ENCODE measurements at regions of chr17 and their contacts with region 1.

Region 1: DNA sequence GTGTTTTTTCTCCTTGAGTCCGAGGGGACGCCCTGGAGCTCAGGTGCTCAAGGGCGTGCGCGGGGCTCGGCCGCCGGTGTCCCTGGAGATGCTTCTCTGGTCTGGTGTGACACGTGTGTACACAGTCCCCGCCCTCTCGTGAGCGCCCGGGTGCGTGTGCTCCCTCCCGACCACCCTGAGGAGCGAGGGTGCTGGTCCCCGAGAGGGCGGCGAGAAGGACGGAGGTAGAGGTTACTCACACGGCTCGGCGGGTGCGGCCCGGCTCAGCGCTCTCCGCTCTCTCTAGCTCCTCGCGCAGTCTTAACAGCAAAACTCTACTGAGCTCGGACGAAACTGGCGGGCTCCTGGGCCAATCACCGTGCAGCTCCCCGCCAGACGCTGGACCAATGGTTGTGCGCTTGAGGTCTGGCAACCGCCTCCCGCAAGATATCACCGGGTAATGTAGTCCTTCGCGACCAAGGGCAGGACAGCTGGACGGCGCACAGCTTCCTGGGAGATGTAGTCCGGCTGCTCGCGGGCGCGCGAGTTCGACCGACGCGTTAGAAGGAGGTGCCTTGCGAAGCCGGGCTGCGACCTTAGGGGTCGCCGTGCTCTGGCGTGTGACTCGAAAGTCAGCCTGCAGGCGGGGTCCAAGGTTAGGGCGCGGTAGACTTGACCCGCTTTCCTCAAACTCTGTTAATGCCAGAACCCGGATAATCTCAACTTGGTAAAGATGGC is at the start of gene SLC25A19:
- DNase-seq: peak; percentile 99
- H3K4me3 ChIP-seq: peak within 1 kb of the TSS; percentile 87
- H3K27ac ChIP-seq: peak within 1 kb of the TSS; percentile 90
- H3K4me1 ChIP-seq: no peaks in the 10 kb centered on the region
- H3K27me3 ChIP-seq: no peaks in the 10 kb centered on the region
- CTCF ChIP-seq: no peak
- total RNA-seq, gene SLC25A19: 40.0 and 45.0 TPM in 2 replicates

Region 2: DNA sequence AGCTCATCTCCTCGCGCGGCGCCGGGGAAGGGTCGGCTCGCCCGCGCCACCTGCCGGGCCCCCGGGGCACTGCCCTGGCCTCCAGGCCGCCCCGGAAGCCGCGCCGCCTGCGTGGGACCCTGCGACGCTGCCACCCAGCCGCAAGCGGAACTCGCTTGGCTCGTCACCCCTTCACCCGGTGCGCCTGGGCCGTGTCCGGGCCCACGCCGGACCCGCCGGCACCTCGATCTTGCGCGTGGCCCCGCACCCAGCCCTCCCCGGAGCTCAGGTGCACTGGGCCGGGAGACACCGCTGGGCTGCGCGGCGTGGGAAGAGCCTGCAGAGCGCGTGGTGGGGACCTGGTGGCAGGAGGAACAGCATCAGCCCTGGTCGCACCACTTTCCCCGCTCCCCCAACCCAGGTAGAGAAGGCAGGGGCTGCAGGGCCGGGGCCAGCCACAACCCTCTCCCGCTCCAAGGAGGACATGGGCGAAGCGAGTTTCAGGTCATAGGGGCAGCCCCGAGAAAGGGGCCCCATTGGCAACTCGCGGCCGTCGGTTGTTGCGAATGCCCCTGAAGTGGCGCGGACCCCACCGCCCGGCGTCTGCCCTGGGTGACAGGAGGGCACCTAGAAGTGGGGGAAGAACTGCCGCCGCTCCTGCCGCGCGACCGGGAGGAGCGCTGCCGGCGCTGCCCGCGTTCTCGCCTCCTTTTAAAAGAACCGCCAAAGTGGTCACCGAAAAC is 17.9 kb before region 1 on chr17:
- CTCF ChIA-PET with region 1: interaction called, 16 read pairs
- POLR2A ChIA-PET with region 1: interaction called, 12 read pairs
- intact Hi-C with region 1: no loop called
- DNase-seq: peak; percentile 89
- H3K4me3 ChIP-seq: peak overlapping the region; percentile 100
- H3K27ac ChIP-seq: peak overlapping the region; percentile 83
- H3K4me1 ChIP-seq: peaks cover 9% of the 10 kb centered on the region
- H3K27me3 ChIP-seq: no peaks in the 10 kb centered on the region
- CTCF ChIP-seq: peak; percentile 37; the same call in 1 of the 2 replicates

Measured in A673 (cell line).